ENCODE measurements at regions of chr11 and their contacts with region 1.

Region 1: DNA sequence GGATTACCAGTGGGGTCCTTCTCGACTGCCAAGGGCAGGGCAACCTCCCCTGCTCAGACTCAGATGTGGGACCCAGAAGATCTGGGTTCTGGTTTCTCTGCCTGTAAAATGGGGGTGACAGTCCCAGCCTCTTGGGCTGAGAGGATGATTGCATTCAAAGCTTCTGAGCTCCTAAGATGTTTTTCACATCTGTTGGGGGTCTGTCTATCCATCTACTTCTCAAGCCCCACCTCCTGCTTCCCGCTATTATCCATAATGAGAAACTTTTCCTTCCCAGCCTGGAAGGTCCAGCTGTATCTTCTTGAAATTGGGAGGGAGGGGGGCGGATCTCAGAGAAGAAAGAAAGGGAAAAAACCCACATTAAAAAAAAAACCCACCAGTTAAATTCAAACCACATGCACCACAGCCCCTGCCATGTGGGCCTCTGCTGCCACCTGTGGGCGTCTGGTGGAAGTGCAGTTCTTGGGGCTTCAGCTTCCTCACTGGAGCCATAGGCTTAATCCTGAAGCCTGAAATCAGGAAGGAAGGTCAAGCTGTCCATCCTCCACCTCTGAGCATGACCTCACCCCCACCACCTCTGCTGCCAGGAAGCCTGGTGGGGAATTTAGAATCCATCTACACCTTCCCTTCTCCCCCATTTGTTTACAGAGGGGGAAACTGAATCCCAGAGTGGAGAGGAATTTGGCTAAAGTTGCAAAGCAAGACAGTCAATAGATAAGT is 27.3 kb downstream of the ARHGEF17 start:
- DNase-seq: no peak
- H3K4me3 ChIP-seq: peak overlapping the region; percentile 27; the same call in 1 of the 2 replicates
- H3K27ac ChIP-seq: peak overlapping the region; percentile 87
- H3K27me3 ChIP-seq: no peaks in the 10 kb centered on the region
- CTCF ChIP-seq: peak; percentile 98

Region 2: GRCh38 chr11:73257342-73258103 is 77.8 kb before region 1 on chr11:
- CTCF ChIA-PET with region 1: interaction called, 12 read pairs
- POLR2A ChIA-PET with region 1: no interaction called
- DNase-seq: peak; percentile 73
- H3K4me3 ChIP-seq: no peak overlapping the region
- H3K27ac ChIP-seq: peak overlapping the region; percentile 98
- H3K27me3 ChIP-seq: no peaks in the 10 kb centered on the region
- CTCF ChIP-seq: no peak

Region 3: GRCh38 chr11:73295231-73295995 is 40.0 kb before region 1 on chr11:
- CTCF ChIA-PET with region 1: interaction called, 23 read pairs
- POLR2A ChIA-PET with region 1: no interaction called
- DNase-seq: no peak
- H3K4me3 ChIP-seq: no peak overlapping the region
- H3K27ac ChIP-seq: peak overlapping the region; percentile 54
- H3K27me3 ChIP-seq: no peaks in the 10 kb centered on the region
- CTCF ChIP-seq: peak; percentile 96

Region 4: DNA sequence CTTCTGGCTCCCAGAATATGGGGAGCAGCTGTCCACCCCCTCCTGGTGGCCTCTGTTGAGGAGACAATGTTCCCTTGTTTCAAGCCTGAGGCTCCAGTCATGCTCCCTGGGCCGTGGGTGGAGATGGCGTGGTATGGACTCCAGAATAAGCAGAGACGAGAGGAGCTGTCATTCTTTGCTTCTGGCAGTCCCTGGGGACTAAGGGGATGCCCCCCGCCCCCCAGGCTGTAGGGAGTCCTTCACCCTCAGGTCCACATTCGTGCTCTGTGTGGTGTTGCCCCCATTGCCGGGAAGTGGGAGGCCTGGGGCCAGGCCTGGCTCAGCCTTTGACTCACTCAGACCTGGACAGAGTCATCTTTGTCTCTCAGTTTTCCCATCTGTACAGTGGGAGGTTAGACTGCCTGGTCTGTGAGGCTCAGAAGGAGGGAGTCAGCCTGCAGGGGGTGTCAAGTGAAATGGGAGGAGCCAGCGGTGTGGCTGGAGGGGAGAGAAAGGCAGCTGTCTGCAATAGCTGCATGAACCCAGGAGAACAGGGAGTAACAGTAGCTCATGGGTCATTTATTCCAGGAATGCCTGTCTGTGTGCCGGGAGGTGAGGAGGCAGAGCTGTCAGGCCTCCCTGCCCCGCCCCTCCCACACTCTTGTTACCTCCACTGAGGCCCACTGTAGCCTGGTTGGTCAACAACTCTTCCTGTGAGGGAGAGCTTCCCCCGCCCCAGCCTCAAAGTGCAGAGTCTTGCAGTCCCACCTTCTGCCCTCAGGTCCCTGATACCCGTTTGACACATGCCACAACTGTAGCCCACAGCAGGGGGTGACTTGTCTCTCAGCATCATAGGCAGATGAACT is 21.0 kb before region 1 on chr11:
- CTCF ChIA-PET with region 1: interaction called, 137 read pairs
- POLR2A ChIA-PET with region 1: interaction called, 70 read pairs
- DNase-seq: no peak
- H3K4me3 ChIP-seq: peak overlapping the region; percentile 77
- H3K27ac ChIP-seq: peak overlapping the region; percentile 80
- H3K27me3 ChIP-seq: no peaks in the 10 kb centered on the region
- CTCF ChIP-seq: 0 out of 2 replicates have a peak, but pooled peaks have one; percentile 15

Region 5: GRCh38 chr11:73325036-73325981 is 10.1 kb before region 1 on chr11:
- CTCF ChIA-PET with region 1: interaction called, 26 read pairs
- POLR2A ChIA-PET with region 1: interaction called, 9 read pairs
- DNase-seq: no peak
- H3K4me3 ChIP-seq: no peak overlapping the region
- H3K27ac ChIP-seq: peak overlapping the region; percentile 87
- H3K27me3 ChIP-seq: no peaks in the 10 kb centered on the region
- CTCF ChIP-seq: no peak